Activated B cell treated with CpG ODN at 0.5 μM for 24 hours (primary cell): ENCODE measurements at regions of chr17 and their contacts with region 1.

Region 1: DNA sequence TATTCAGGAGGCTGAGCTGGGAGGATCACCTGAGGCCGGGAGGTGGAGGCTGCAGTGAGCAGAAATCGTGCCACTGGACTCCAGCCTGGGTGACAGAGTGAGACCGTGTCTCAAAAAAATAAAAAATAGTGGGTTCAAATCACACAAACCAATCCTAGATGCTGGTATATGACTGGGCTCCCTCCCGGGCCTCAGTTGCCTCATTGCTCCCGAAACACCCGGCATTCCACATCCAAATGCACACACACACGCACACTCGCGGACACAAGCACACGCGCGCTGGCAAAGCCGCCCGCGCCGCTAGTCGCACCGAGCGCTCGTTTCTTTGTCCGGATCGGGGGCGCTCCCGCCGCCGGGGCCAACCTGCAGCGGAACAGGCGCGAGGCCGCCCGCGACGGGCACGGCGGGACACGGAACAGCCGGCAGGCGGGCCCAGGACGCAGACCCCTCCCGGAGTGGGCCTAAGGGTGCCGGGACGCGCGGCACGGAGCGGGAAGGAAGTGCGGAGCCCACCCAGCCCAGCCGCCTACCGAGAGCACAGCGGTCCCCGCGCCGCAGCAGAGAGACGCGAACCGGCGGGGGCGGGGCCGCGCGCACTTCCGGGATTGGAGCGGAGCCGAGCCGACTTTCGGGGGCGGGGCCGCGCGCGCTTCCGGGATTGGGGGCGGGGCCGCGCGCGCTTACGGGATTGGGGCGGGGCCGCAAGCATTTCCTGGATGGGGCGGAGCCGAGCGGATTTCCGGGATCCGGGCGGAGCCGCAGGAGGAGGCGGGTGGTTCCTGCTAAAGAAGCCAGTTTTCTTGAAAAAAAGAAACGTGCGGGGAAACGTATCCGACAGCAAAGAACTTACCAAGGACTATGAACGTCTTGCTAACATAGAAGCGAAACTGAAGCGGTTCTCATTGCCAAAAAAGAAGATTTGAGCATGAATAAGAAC is at the start of gene CYBC1:
- DNase-seq: peak; percentile 96
- ATAC-seq: peak; percentile 42
- H3K4me3 Mint-ChIP-seq: peak within 1 kb of the TSS; percentile 94
- H3K27ac Mint-ChIP-seq: peak within 1 kb of the TSS; percentile 97
- H3K4me1 Mint-ChIP-seq: peaks cover 42% of the 10 kb centered on the region
- H3K27me3 Mint-ChIP-seq: no peaks in the 10 kb centered on the region
- CTCF ChIP-seq: no peak
- total RNA-seq, gene CYBC1: 405 and 501 TPM in 2 replicates

Region 2: GRCh38 chr17:82434216-82434565 is 16.2 kb before region 1 on chr17:
- CTCF ChIA-PET with region 1: no interaction called
- POLR2A ChIA-PET with region 1: interaction called, 130 read pairs
- intact Hi-C with region 1: loop called (anchors 1 kb)
- DNase-seq: no peak
- ATAC-seq: peak; percentile 84
- H3K4me3 Mint-ChIP-seq: peak overlapping the region; percentile 50
- H3K27ac Mint-ChIP-seq: peak overlapping the region; percentile 78
- H3K4me1 Mint-ChIP-seq: peaks cover 45% of the 10 kb centered on the region
- H3K27me3 Mint-ChIP-seq: no peaks in the 10 kb centered on the region
- CTCF ChIP-seq: no peak